Endothelial cell of umbilical vein (primary cell): ENCODE measurements at regions of chr2 and their contacts with region 1.

Region 1: GRCh38 chr2:218979846-218980734 is 4.9 kb downstream of the FEV start:
- DNase-seq: peak; percentile 81
- H3K4me3 ChIP-seq: no peak overlapping the region
- H3K27ac ChIP-seq: no peak overlapping the region
- H3K4me1 ChIP-seq: peaks cover 15% of the 10 kb centered on the region
- H3K27me3 ChIP-seq: peaks cover 41 to 53% of the 10 kb centered on the region in 2 experiments
- CTCF ChIP-seq: peak; percentile 91 to 98
- POLR2A ChIP-seq: no peak

Region 2: DNA sequence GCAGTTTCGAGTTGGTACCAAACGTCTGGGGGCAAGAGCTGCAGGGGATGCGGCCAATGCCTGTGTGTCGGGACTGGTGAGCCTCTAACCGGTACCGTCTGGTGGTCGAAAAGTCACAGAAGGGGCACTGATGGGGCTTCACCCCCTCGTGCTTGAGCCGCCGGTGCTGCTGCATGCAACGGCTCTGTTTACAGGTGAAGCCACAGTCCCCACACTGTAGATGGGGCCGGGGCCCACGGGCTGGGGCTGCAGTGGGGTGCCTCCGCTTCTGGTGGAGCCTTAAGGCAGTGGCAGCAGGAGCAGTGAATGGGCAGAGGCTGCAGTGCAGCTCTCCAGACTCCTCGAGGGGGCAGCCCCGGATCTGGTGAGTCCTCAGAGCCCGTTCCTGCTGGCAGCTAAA is 337.3 kb before region 1 on chr2:
- CTCF ChIA-PET with region 1: no interaction called
- POLR2A ChIA-PET with region 1: no interaction called
- dilution Hi-C with region 1: no loop called
- intact Hi-C with region 1: no loop called
- DNase-seq: no peak
- H3K4me3 ChIP-seq: no peak overlapping the region
- H3K27ac ChIP-seq: no peak overlapping the region
- H3K4me1 ChIP-seq: peaks cover 6% of the 10 kb centered on the region
- H3K27me3 ChIP-seq: no peaks in the 10 kb centered on the region
- CTCF ChIP-seq: no peak
- POLR2A ChIP-seq: no peak

Region 3: DNA sequence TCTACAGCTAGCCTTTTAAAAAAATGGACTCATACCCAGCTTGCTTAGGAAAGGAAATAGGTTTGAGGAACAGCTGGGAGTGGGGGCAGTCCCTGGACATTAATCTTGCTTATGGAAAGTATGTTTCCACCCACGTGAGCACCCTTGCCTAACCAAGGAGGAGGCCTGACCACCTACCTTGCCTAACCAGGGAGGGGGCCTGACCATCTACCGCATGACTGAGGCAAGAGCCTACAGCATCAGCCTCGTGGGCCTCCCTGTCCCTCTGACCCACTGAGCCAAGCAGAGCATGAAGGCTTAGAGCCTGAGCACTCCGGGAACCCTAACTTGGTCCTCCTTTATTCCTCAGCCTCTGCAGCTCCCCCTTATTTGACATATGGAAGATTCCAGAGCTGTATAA is 168.7 kb before region 1 on chr2:
- CTCF ChIA-PET with region 1: no interaction called
- POLR2A ChIA-PET with region 1: no interaction called
- dilution Hi-C with region 1: no loop called
- intact Hi-C with region 1: no loop called
- DNase-seq: no peak
- H3K4me3 ChIP-seq: no peak overlapping the region
- H3K27ac ChIP-seq: no peak overlapping the region
- H3K4me1 ChIP-seq: no peaks in the 10 kb centered on the region
- H3K27me3 ChIP-seq: peaks cover 0 to 2% of the 10 kb centered on the region in 2 experiments
- CTCF ChIP-seq: no peak
- POLR2A ChIP-seq: no peak

Region 4: GRCh38 chr2:218876562-218877219 is 103.4 kb before region 1 on chr2:
- CTCF ChIA-PET with region 1: interaction called, 27 read pairs
- POLR2A ChIA-PET with region 1: no interaction called
- dilution Hi-C with region 1: no loop called
- intact Hi-C with region 1: no loop called
- DNase-seq: peak; percentile 74
- H3K4me3 ChIP-seq: no peak overlapping the region
- H3K27ac ChIP-seq: no peak overlapping the region
- H3K4me1 ChIP-seq: no peaks in the 10 kb centered on the region
- H3K27me3 ChIP-seq: peaks cover 76 to 86% of the 10 kb centered on the region in 2 experiments
- CTCF ChIP-seq: peak; percentile 89 to 90
- POLR2A ChIP-seq: no peak

Region 5: DNA sequence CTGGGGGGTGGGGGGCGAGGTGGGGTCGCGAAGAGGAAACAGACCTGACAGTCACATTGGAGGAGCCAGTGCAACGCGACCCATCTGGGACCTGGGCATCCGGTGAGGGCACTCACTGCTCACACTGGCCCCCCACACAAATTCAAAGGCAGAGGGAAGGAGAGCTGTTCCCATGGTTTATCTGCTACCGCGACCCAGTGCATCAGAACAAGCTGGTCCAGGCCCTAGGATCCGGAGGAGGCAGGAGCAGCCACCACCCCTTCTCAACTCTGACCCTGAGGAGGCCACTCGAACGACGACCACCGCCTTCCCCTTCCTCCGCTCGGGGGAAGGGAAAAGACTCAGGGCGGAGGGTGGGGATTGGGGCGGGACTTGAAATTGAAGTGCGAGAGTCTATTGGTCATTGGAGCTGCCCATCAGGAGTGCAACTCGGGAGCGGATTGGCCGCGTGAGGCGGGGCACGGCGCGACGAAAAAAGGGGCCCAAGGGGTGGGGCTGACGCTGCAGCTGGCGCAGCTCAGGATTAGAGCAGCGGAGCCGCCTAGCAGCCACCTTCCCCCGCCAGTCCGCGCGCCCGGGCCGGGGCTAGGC is 20.9 kb before region 1 on chr2 and contains the start of gene CDK5R2:
- CTCF ChIA-PET with region 1: interaction called, 45 read pairs
- POLR2A ChIA-PET with region 1: no interaction called
- dilution Hi-C with region 1: no loop called
- intact Hi-C with region 1: no loop called
- DNase-seq: peak; percentile 77
- H3K4me3 ChIP-seq: peak within 1 kb of the TSS in 1 of 3 experiments; percentile 13
- H3K27ac ChIP-seq: no peak within 1 kb of the TSS
- H3K4me1 ChIP-seq: no peaks in the 10 kb centered on the region
- H3K27me3 ChIP-seq: peaks cover 55 to 70% of the 10 kb centered on the region in 2 experiments
- CTCF ChIP-seq: no peak
- POLR2A ChIP-seq: no peak
- total RNA-seq, gene CDK5R2: not detected in 2 replicates

Region 6: DNA sequence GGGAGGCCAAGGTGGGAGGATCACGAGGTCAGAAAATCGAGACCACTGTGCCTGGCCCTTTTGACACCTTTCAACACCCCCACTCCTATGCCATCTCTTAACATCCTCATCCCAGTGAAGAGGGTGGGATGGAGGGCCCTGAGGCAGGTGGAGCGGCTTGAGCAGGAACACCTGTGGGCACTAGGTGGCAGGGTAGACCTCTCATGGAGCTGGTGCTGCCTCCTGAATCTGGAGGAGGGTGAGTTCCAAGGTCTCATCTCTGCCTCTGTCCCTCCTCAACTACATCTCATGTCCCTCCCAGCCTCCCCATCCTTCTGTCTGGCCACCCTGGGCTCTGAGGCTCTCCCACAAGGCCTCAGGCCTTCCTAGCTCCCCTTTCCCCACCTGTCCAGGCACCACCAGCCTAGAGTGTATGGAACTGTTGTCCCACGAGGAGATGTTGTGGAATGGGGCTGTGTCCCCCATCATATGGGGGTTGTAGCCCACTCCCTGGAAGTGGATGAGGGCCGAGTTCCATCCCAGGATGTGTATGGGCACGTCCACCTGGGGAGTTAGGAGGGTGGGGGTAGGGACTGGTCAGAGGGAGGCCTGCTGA is 30.2 kb after region 1 on chr2:
- CTCF ChIA-PET with region 1: interaction called, 56 read pairs
- POLR2A ChIA-PET with region 1: no interaction called
- dilution Hi-C with region 1: no loop called
- intact Hi-C with region 1: no loop called
- DNase-seq: no peak
- H3K4me3 ChIP-seq: no peak overlapping the region
- H3K27ac ChIP-seq: no peak overlapping the region
- H3K4me1 ChIP-seq: no peaks in the 10 kb centered on the region
- H3K27me3 ChIP-seq: peaks cover 0 to 2% of the 10 kb centered on the region in 2 experiments
- CTCF ChIP-seq: peak in 1 of 2 donors; percentile 26
- POLR2A ChIP-seq: no peak

Region 7: DNA sequence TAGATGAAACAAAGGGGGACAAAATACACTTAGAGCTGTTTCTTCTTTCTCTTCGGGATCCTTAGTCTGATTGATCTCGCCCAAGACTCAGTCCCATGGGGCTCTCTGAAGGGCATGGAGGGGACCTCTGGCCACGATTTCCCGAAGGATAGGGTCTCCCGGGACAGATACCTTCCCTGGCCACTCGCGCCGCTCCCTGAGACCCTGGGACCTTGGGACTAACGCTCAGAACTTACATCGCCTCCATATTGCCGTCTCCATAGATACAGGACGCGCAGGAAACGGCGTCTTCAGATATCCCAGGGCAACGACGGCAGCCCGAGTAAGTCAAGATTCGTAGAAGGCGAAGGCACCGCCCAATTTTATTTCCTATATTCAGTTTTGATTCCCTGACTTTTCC is 61.2 kb after region 1 on chr2 and contains the start of gene CFAP65:
- CTCF ChIA-PET with region 1: interaction called, 12 read pairs
- POLR2A ChIA-PET with region 1: no interaction called
- dilution Hi-C with region 1: no loop called
- intact Hi-C with region 1: no loop called
- DNase-seq: peak; percentile 40
- H3K4me3 ChIP-seq: peak within 1 kb of the TSS in 1 of 3 experiments; percentile 21
- H3K27ac ChIP-seq: no peak within 1 kb of the TSS
- H3K4me1 ChIP-seq: no peaks in the 10 kb centered on the region
- H3K27me3 ChIP-seq: peaks cover 18 to 22% of the 10 kb centered on the region in 2 experiments
- CTCF ChIP-seq: no peak
- POLR2A ChIP-seq: no peak
- total RNA-seq, gene CFAP65: not detected in 2 replicates

Region 8: GRCh38 chr2:219104107-219105035 is 124.3 kb after region 1 on chr2:
- CTCF ChIA-PET with region 1: interaction called, 27 read pairs
- POLR2A ChIA-PET with region 1: no interaction called
- dilution Hi-C with region 1: no loop called
- intact Hi-C with region 1: loop called (anchors 5 kb)
- DNase-seq: peak; percentile 35
- H3K4me3 ChIP-seq: no peak overlapping the region
- H3K27ac ChIP-seq: no peak overlapping the region
- H3K4me1 ChIP-seq: no peaks in the 10 kb centered on the region
- H3K27me3 ChIP-seq: no peaks in the 10 kb centered on the region
- CTCF ChIP-seq: peak; percentile 84 to 86
- POLR2A ChIP-seq: no peak

Region 9: DNA sequence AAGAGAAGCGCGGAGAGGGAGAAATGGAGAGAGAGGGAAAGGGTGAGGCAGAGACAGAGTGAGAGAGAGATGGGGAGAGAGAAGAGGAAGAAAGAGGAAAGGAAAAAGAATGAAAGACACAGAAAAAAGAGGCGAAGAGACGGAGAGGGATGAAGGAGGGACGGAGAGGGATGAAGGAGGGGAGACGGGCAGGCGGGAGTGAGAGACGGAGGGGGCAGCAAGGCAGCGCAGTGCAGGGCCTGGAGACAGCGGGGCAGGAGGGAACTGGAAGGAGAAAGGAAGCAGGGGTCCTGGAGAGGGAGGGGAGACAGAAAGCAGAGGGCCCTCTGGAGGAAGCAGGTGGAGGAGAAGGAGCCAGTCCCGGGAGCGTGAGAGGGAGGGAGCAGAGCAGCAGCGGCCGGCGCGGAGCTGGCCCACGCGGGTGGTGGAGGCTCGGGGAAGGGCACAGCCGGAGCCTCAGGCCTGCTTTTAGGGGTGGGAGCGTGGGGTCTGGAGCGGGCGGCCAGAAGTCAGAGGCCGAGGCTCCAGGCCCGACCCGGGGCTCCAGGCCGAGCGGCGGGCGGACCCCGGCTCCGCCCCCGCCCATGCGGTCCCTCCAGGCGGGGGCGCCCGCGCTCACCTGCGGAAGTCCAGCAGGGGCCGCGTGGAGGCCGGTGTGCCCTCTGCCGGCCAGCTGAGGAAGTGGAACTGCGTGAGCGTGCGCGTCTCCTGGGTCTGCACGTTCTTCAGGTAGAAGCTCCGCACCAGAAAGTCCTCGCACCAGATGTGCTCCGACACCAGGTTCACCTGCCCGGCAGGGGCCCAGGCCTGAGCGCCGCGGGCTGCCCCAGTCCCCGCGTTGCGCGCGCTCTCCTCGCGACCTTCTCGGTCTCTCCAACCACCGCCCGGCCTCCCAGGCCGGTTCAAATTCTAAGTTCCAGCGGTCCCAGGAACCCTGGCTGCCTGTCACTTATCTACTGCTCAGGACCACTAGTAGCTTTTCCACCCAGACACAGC is 314.6 kb after region 1 on chr2:
- CTCF ChIA-PET with region 1: interaction called, 4 read pairs
- POLR2A ChIA-PET with region 1: no interaction called
- dilution Hi-C with region 1: no loop called
- intact Hi-C with region 1: loop called (anchors 5 kb)
- DNase-seq: peak; percentile 87
- H3K4me3 ChIP-seq: peak overlapping the region; percentile 40 to 46 (median 40)
- H3K27ac ChIP-seq: no peak overlapping the region
- H3K4me1 ChIP-seq: peaks cover 4% of the 10 kb centered on the region
- H3K27me3 ChIP-seq: peaks cover 0 to 2% of the 10 kb centered on the region in 2 experiments
- CTCF ChIP-seq: peak; percentile 95 to 98
- POLR2A ChIP-seq: peak; percentile 64

Region 10: DNA sequence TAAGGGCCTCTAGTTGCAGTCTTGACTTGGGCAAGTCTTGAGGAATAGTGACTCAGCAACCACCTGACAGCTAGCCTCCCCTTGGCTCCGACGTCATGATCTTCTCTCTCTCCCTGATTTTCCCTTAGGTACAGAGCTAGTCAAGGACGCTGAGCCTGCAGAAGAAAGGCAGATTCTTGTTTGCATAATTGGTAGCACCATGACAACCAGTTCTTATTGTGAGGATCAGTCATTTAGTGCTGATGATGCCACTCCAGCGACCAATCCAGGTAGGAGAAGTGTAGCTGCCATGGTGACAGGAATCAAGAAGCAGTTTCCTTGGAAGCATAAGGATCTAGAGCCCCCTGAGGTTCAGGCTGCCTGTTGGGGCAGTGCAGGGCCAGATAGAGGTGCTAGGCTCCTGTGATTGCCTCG is 355.3 kb after region 1 on chr2:
- CTCF ChIA-PET with region 1: no interaction called
- POLR2A ChIA-PET with region 1: no interaction called
- dilution Hi-C with region 1: no loop called
- intact Hi-C with region 1: no loop called
- DNase-seq: no peak
- H3K4me3 ChIP-seq: no peak overlapping the region
- H3K27ac ChIP-seq: no peak overlapping the region
- H3K4me1 ChIP-seq: no peaks in the 10 kb centered on the region
- H3K27me3 ChIP-seq: peaks cover 18 to 29% of the 10 kb centered on the region in 2 experiments
- CTCF ChIP-seq: no peak
- POLR2A ChIP-seq: no peak